ENCODE measurements at regions of chr13 and their contacts with region 1.

Region 1: DNA sequence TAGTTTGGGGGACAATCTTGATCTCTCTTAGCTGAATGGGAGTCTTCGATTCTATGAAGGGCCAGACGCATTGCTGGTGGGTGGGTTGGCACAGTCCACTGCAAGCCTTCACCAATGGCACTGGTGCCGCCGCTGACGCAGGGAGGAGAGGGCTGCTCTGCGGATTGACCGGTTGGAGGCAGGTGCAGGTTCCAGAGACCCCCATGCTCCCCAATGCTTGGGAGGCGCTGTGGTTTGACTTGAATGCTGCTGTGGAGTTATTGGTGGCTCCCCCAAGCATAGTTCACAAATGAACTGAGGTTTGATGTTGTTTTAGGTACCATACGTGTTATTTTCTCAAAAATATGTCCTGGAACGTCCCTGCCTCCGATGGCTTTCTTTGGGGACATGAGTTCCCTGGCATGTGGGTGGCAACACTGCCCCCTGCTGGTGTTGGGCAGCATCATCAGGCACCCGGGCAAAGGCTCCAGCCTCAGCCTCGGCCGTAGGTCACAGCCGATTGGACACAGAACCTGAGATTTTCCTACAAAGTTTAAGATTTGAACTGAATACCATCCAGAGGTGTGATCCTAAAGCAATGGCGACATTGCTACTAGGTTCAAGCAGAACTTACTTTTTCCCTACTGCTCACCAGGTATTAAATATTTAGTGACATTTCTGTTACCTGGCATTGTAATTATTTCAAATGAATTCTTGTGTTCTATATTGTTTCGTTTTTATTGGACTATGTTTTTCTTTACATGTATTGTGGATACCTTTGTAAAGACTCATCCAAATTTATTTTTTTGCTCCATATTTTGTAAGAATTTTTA is 95.5 kb downstream of the ANKRD10 start:
- DNase-seq: peak; percentile 88
- H3K4me3 ChIP-seq: no peak overlapping the region
- H3K27ac ChIP-seq: no peak overlapping the region
- H3K4me1 ChIP-seq: peaks cover 0 to 7% (median 3%) of the 10 kb centered on the region in 4 donors
- H3K27me3 ChIP-seq: no peaks in the 10 kb centered on the region
- CTCF ChIP-seq: peak; percentile 85 to 98 (median 94)
- EP300 ChIP-seq: no peak
- POLR2A ChIP-seq: no peak

Region 2: DNA sequence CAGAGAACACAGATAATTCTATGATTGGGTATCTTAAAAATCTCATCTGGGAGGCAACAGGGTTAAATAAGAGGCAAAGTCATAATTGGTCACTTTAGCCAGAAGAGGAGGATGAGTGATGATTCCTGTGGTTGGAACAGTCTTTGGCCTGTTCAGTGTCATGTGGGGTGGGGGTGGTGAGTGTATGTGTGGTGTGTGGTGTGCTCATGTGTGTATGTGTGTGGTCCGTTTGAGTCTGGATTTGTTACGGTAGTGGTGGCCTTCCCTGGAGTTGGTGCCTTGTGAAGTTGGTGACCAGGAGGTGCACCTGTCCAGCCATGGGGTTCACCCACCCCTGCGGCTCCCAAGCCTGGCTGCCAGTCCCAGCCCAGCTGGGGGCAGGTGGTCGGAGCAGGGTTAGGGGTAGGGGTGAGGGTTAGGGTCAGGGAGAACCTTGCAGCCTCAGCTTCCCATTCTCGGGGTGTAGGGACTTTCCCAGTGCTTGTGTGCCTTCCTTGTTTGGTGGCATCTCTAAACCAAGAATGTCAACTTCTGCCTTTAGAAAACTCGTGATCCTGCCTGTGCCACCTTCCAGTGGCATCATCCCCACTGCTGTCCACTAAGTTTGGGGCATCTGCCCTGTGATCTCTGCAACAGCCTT is 355.4 kb before region 1 on chr13:
- intact Hi-C with region 1: loop called (anchors 10 kb)
- DNase-seq: no peak
- H3K4me3 ChIP-seq: no peak overlapping the region
- H3K27ac ChIP-seq: peak overlapping the region in 3 of 4 donors; percentile 1 to 57 (median 51)
- H3K4me1 ChIP-seq: no peaks in the 10 kb centered on the region
- H3K27me3 ChIP-seq: no peaks in the 10 kb centered on the region
- CTCF ChIP-seq: no peak
- EP300 ChIP-seq: no peak
- POLR2A ChIP-seq: no peak

Measured in sigmoid colon (tissue), 7 donors.